AG04450 (cell line): ENCODE measurements at regions of chr10 and their contacts with region 1.

Region 1: DNA sequence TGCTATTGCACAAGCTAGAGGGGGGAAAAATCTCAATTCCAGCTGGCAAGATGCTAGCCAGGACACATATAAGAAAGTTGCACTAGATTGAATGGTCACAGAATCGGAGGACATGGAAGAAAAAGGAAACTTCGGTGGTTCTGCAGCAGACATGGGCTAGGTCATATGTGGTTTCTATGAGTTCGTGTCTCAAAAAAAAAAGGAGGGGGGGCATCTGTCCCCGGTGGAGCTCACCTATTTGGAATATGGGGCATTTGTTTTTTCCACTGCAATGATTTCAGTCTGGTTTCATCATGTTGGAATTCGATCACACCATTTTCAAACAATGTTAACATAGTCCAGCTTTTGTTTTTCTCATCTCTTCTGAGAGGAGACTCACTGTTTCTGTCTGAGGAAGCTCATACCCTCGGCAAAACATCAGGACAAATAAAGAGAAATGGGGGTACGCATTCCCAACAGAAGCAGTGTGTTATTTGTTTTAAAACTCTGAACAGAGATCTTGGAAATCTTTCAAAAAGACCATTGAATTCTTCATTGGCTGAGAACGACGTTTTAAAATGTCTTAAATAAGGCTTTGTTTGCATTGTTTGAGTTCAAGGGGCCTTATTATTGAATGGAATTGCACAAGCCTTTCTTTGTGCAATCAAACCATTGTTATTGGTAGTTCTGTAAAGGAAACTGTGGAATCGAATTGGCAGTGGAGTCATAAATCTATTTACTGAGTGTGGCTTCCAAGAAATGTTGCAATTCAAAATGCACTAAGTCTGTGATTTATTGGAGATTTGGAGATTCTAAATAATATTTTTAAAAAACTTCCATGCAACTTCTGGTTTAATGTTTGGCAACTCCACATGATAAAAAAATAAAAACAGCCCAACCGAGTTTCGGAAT is 173.2 kb downstream of the RTKN2 start:
- DNase-seq: no peak
- H3K4me3 ChIP-seq: no peak overlapping the region
- H3K27ac ChIP-seq: peak overlapping the region; percentile 77
- H3K27me3 ChIP-seq: no peaks in the 10 kb centered on the region
- CTCF ChIP-seq: no peak

Region 2: GRCh38 chr10:62082729-62083411 is 12.6 kb before region 1 on chr10:
- CTCF ChIA-PET with region 1: no interaction called
- POLR2A ChIA-PET with region 1: interaction called, 10 read pairs
- DNase-seq: no peak
- H3K4me3 ChIP-seq: no peak overlapping the region
- H3K27ac ChIP-seq: peak overlapping the region; percentile 94
- H3K27me3 ChIP-seq: no peaks in the 10 kb centered on the region
- CTCF ChIP-seq: no peak